A549 (cell line): ENCODE measurements at regions of chr1 and their contacts with region 1.

Region 1: GRCh38 chr1:33007190-33008050 is 29.3 kb downstream of the AK2 start:
- DNase-seq: peak; percentile 79 to 84
- ATAC-seq: peak; percentile 98 to 99
- H3K4me3 ChIP-seq: no peak overlapping the region
- H3K27ac ChIP-seq: peak overlapping the region in 1 of 2 experiments; percentile 59; a peak in 1 of 6 replicates
- H3K4me1 ChIP-seq: peaks cover 19% of the 10 kb centered on the region
- CTCF ChIP-seq: peak; percentile 51
- EP300 ChIP-seq: no peak
- POLR2A ChIP-seq: no peak
- RAD21 ChIP-seq: peak; percentile 59 to 67

Region 2: GRCh38 chr1:32307323-32307722 is 700.1 kb before region 1 on chr1:
- CTCF ChIA-PET with region 1: no interaction called
- POLR2A ChIA-PET with region 1: no interaction called
- DNase-seq: no peak
- ATAC-seq: no peak
- H3K4me3 ChIP-seq: no peak overlapping the region
- H3K27ac ChIP-seq: no peak overlapping the region
- H3K4me1 ChIP-seq: peaks cover 27% of the 10 kb centered on the region; the same call in 2 of the 3 replicates
- CTCF ChIP-seq: no peak
- EP300 ChIP-seq: no peak
- POLR2A ChIP-seq: no peak
- RAD21 ChIP-seq: no peak

Region 3: GRCh38 chr1:32953495-32953894 is 53.9 kb before region 1 on chr1:
- CTCF ChIA-PET with region 1: interaction called, 17 read pairs
- POLR2A ChIA-PET with region 1: no interaction called
- DNase-seq: peak in 1 of 2 experiments; percentile 48
- ATAC-seq: peak in 1 of 2 experiments; percentile 59; a peak in 2 of 6 replicates
- H3K4me3 ChIP-seq: no peak overlapping the region
- H3K27ac ChIP-seq: peak overlapping the region in 1 of 2 experiments; percentile 48; a peak in 2 of 6 replicates
- H3K4me1 ChIP-seq: peaks cover 37% of the 10 kb centered on the region
- CTCF ChIP-seq: no peak
- EP300 ChIP-seq: no peak
- POLR2A ChIP-seq: no peak
- RAD21 ChIP-seq: no peak

Region 4: DNA sequence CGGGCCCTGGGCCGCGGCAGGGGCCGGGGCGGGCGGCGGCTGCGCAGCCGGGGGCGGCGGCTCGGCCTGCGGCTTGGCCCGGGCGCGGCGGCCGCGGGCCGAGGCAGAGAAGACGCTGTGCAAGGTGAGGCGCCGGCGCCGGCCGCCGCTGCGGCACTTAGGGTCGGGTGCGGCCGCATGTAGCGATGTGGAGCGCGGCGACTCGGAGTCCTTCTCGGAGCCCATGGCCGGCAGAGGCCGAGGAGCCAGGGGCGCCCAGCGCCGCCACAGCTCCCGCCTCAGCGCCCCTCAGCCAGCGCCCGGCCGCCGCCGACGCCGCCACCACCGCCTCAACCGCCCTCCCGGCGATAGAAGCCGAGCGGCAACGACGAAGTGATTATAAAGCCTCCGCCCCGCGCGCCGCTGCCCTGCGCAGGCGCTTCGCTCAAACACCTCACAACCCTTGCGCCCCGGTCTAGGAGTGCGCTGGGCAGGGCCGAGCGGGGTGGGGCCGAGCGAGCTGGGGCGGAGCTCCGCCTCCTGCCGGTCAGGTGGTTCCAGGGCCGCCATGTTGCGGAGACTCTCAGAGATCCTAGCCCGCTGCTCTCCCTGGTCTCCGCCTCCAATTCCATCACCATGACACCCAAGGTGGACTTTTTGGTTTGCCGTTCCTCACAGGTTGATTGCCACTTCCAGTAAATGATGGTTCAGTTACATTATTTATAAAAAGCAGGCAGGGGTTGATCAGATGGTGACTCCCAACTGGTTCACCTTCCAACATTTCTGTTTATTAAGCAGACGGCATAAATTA is 42.8 kb before region 1 on chr1 and contains the start of gene RNF19B:
- CTCF ChIA-PET with region 1: interaction called, 3 read pairs
- POLR2A ChIA-PET with region 1: interaction called, 15 read pairs
- DNase-seq: peak; percentile 90 to 94
- ATAC-seq: peak; percentile 90 to 98
- H3K4me3 ChIP-seq: peak within 1 kb of the TSS; percentile 91
- H3K27ac ChIP-seq: peak within 1 kb of the TSS; percentile 81 to 98
- H3K4me1 ChIP-seq: peaks cover 16% of the 10 kb centered on the region; the same call in 2 of the 3 replicates
- CTCF ChIP-seq: no peak
- EP300 ChIP-seq: no peak
- POLR2A ChIP-seq: peak; percentile 98
- RAD21 ChIP-seq: peak; percentile 2 to 27; a peak in 1 of 5 replicates
- polyA plus RNA-seq, gene RNF19B: 21.7 and 22.6 TPM in 2 replicates

Region 5: DNA sequence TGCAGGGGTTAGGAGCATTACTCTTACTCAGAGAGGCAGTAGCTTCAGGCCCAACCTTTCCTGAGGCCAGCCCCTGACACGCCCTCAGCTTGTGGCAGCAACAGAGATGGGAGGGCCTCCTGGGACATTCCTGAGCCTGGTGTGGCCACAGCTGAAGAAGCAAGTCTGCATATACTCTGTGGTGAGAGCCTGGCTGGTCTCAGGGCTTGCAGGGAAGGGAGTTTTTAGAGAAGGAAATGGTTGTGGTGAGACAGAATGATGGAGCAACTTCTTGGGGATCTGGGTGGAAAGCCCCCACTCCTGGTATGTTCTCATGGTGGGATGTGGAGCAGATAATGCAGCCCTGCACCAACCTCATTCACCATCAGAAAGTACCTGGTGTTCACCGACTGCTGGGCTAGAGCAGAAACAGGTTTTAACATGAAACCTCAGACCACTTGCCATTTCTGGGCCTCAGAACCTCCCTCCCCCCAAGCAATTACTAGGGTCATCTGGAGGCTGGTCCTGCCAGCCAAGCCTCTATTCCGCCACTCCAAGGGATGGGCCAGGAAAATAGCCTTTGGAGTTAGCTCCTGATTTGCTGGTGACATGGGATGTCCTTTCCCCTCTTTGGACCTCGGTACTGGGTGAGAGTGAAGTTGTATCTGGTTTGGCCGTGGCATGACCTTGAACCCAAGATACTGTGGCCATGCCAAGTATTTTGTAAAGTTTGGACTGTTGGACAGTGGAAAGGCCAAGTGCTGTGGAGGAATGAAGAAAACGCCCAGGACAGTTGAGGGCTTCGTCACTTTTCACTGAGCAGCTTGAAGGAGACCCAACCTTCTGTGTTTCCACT is 14.7 kb before region 1 on chr1:
- CTCF ChIA-PET with region 1: interaction called, 24 read pairs
- POLR2A ChIA-PET with region 1: interaction called, 4 read pairs
- DNase-seq: peak; percentile 83 to 89
- ATAC-seq: peak; percentile 93 to 95
- H3K4me3 ChIP-seq: no peak overlapping the region
- H3K27ac ChIP-seq: peak overlapping the region; percentile 75 to 89
- H3K4me1 ChIP-seq: peaks cover 55% of the 10 kb centered on the region
- CTCF ChIP-seq: no peak
- EP300 ChIP-seq: no peak
- POLR2A ChIP-seq: no peak
- RAD21 ChIP-seq: no peak

Region 6: GRCh38 chr1:33022650-33023200 is 15.3 kb after region 1 on chr1:
- CTCF ChIA-PET with region 1: interaction called, 10 read pairs
- POLR2A ChIA-PET with region 1: no interaction called
- DNase-seq: no peak
- ATAC-seq: no peak
- H3K4me3 ChIP-seq: no peak overlapping the region
- H3K27ac ChIP-seq: no peak overlapping the region
- H3K4me1 ChIP-seq: no peaks in the 10 kb centered on the region
- CTCF ChIP-seq: no peak
- EP300 ChIP-seq: no peak
- POLR2A ChIP-seq: no peak
- RAD21 ChIP-seq: no peak

Region 7: GRCh38 chr1:33055210-33056008 is 48.0 kb after region 1 on chr1:
- CTCF ChIA-PET with region 1: interaction called, 25 read pairs
- POLR2A ChIA-PET with region 1: no interaction called
- DNase-seq: peak; percentile 64 to 92
- ATAC-seq: peak; percentile 92 to 97
- H3K4me3 ChIP-seq: no peak overlapping the region
- H3K27ac ChIP-seq: peak overlapping the region; percentile 71 to 78
- H3K4me1 ChIP-seq: peaks cover 13% of the 10 kb centered on the region
- CTCF ChIP-seq: peak; percentile 55
- EP300 ChIP-seq: no peak
- POLR2A ChIP-seq: no peak
- RAD21 ChIP-seq: peak; percentile 57 to 65